K562 (cell line): ENCODE measurements at regions of chr1 and their contacts with region 1.

Region 1: DNA sequence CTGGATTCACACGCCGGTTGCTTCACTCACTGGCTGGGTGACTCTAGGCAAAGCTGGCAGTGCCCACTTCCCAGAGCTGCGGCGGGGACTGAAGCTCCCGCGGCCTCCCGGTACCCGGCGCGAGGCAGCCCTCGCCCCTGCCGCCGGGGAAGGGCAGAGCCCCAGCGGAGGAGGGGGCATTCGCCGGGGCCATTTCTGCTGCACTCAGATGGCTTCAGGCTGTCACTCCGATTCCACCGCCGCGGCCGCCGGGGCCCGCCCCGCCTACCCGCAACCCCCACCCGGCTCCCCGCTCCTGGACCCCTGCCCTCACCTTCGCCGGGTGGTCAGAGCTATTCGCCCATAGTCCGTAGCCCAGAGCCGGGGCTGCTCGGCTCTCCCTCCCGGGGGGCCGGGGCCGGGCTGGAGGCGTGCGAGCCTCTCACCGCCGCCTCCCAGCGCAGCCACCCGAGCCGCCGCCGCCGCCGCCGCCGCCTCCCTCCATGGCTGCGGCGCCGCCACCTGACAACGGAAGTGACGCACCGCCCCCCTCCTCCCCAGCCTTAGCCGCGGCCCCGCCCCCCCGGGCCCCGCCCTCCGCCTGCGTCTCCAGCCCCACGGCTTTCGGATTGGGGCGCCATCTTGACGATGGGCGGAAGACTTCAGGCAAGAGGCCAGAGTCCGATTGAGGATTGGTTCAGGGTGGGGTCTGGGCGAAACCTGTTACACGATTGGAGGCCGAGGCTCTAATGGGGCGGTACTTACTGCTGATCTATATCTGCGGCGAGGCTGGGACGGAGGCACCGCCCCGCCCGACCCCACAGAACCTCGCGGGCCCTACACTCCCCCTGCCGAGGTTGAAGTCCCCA is at the start of gene STK40:
- DNase-seq: peak; percentile 97 to 100 (median 98)
- ATAC-seq: peak; percentile 88
- H3K4me3 ChIP-seq: peak within 1 kb of the TSS; percentile 91
- H3K27ac ChIP-seq: peak within 1 kb of the TSS; percentile 99
- H3K4me1 ChIP-seq: peaks cover 29 to 33% of the 10 kb centered on the region in 2 experiments
- H3K27me3 ChIP-seq: no peaks in the 10 kb centered on the region
- CTCF ChIP-seq: no peak; a peak in 1 of 6 replicates
- EP300 ChIP-seq: no peak
- POLR2A ChIP-seq: no peak
- RAD21 ChIP-seq: no peak
- polyA plus RNA-seq, gene STK40: 0.69 to 1.7 TPM

Region 2: DNA sequence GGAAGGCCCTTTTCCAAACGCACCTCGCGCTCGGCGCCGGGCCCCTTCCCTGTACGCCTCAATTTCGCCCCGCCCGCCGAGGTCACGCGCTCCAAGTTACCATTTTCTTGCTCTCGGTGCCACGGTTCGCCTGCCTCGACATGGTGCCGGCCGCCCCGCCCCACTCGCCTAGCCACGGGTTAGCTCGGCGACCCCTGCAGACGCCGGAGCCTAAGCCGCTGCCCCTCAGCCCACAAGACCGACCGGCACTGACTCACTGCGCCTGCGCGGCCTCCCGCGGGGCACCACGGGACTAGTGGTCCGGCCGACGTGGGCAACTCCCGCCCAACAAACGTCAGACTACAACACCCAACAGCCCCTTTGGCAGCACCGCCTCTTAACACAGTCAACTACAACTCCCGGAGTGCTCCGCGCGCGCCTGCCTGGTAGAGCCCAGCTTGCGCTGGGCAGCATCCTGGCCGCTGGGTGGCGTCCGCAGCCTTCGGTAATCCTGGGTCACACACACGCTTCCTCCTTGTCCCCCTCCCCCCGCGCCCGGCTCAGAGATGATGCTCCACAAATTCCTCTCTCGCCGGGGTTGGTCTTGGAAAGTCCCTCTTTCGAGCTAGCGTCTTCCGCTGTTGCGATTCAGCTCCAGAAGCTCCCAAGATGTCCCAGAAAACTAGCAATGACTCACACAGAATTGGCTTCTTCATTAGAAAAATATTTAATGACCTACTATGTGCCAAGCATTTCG is 236.2 kb before region 1 on chr1 and contains the start of gene TRAPPC3:
- CTCF ChIA-PET with region 1: no interaction called
- POLR2A ChIA-PET with region 1: interaction called, 15 read pairs
- in situ Hi-C with region 1: no loop called
- intact Hi-C with region 1: no loop called
- DNase-seq: peak; percentile 98 to 100 (median 99)
- ATAC-seq: peak; percentile 95
- H3K4me3 ChIP-seq: peak within 1 kb of the TSS; percentile 69
- H3K27ac ChIP-seq: peak within 1 kb of the TSS; percentile 87
- H3K4me1 ChIP-seq: peaks cover 31 to 34% of the 10 kb centered on the region in 2 experiments
- H3K27me3 ChIP-seq: no peaks in the 10 kb centered on the region
- CTCF ChIP-seq: peak; percentile 97 to 99 (median 99)
- EP300 ChIP-seq: peak; percentile 43; the same call in 1 of the 2 replicates
- POLR2A ChIP-seq: peak; percentile 95
- RAD21 ChIP-seq: peak; percentile 99 to 100
- polyA plus RNA-seq, gene TRAPPC3: 20.6 to 41.8 TPM

Region 3: DNA sequence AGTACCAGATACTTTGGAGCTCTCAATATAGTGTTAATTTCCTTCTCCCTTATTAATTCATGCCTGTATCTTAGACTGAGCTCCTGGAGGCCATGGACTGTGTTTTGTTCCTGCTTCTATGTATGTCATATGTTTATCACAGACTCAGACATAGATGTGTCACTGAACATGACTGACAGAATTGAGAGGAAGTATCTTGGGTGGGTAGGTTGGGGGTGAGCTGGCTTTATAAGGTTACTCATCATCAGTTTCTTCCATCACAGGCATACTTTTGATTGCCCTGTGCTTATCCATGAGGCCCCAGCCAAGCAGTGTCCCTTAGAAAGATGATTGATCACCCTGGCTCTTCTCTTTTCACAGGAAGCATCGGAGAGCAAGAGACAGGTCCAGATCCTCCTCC is 85.1 kb before region 1 on chr1:
- CTCF ChIA-PET with region 1: no interaction called
- POLR2A ChIA-PET with region 1: interaction called, 10 read pairs
- in situ Hi-C with region 1: no loop called
- intact Hi-C with region 1: no loop called
- DNase-seq: no peak
- ATAC-seq: no peak
- H3K4me3 ChIP-seq: no peak overlapping the region
- H3K27ac ChIP-seq: peak overlapping the region; percentile 43; the same call in 1 of the 3 replicates
- H3K4me1 ChIP-seq: no peaks in the 10 kb centered on the region; a peak in 1 of 5 replicates
- H3K27me3 ChIP-seq: no peaks in the 10 kb centered on the region
- CTCF ChIP-seq: no peak
- EP300 ChIP-seq: no peak
- POLR2A ChIP-seq: no peak
- RAD21 ChIP-seq: no peak

Region 4: DNA sequence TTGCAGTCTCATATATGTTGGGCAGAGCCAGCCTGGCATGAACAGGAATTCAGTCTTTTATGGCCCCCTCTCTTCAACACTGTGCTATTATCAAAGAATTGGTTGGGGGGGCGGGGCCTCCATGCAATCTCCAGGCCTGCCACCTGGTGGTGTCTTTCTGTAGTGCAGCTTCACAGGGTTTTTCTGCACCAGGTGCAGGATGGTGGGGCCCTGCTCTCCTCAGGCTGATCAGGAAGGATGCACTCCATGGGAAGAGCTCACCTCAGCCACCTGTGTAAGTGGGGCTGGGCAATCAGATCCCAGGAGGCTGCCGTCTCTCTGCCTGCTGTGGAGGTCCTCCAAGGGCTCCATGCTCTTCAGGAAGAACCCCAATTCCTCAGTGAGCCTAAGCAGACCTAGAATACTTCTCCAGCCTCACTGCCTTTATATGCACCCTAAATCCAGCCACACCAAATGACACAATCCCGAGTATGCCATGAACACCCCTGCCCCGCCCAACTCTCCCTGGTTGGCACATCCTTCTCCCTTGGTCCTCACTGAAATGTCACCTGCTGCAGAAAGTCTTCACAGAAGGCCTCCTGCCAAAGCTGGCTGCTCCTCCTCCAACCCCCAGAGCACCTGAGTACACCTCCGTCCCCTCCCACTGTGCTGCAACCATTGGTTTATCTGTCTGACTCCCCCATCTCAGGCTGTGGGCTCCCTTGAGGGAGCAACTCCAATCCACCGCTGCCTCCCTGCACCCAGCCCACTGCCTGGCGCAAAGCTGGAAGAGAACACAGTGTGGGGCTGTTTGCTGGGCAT is 16.4 kb before region 1 on chr1:
- CTCF ChIA-PET with region 1: interaction called, 3 read pairs
- POLR2A ChIA-PET with region 1: interaction called, 34 read pairs
- in situ Hi-C with region 1: no loop called
- intact Hi-C with region 1: no loop called
- DNase-seq: peak; percentile 89 to 91 (median 89)
- ATAC-seq: peak; percentile 61
- H3K4me3 ChIP-seq: no peak overlapping the region
- H3K27ac ChIP-seq: no peak overlapping the region; the same call in 2 of the 3 replicates
- H3K4me1 ChIP-seq: peaks cover 41 to 51% of the 10 kb centered on the region in 2 experiments
- H3K27me3 ChIP-seq: no peaks in the 10 kb centered on the region
- CTCF ChIP-seq: peak; percentile 94 to 96 (median 95)
- EP300 ChIP-seq: no peak
- POLR2A ChIP-seq: 0 out of 2 replicates have a peak, but pooled peaks have one; percentile 11
- RAD21 ChIP-seq: peak; percentile 60 to 80

Region 5: DNA sequence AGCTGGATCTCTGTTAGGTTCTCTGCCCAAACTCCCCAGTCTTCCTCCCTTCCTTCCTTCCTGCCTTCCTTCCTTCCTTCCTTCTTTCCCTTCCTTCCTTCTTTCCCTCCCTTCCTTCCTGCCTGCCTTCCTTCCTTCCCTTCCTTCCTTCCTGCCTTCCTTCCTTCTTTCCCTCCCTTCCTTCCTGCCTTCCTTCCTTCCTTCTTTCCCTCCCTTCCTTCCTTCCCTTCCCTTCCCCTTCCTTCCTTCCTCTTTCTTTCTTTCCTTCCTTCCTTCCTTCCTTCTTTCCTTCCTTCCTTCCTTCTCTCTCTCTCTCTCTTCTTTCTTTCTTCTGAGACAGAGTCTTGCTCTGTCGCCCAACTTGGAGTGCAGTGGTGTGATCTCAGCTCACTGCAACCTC is 20.8 kb after region 1 on chr1:
- CTCF ChIA-PET with region 1: interaction called, 4 read pairs
- POLR2A ChIA-PET with region 1: interaction called, 315 read pairs
- in situ Hi-C with region 1: no loop called
- intact Hi-C with region 1: no loop called
- DNase-seq: no peak
- ATAC-seq: no peak
- H3K4me3 ChIP-seq: no peak overlapping the region
- H3K27ac ChIP-seq: no peak overlapping the region
- H3K4me1 ChIP-seq: peaks cover 6 to 11% of the 10 kb centered on the region in 2 experiments; a peak in 3 of 5 replicates
- H3K27me3 ChIP-seq: no peaks in the 10 kb centered on the region
- CTCF ChIP-seq: no peak
- EP300 ChIP-seq: no peak
- POLR2A ChIP-seq: no peak
- RAD21 ChIP-seq: no peak